ENCODE measurements at regions of chrX and their contacts with region 1.

Region 1: GRCh38 chrX:138925330-138925729 is 213.8 kb upstream of the FGF13 start:
- DNase-seq: peak; percentile 92
- ATAC-seq: peak; percentile 97
- H3K4me3 ChIP-seq: no peak overlapping the region
- H3K27ac ChIP-seq: peak overlapping the region; percentile 76
- H3K4me1 ChIP-seq: peaks cover 36% of the 10 kb centered on the region
- H3K27me3 ChIP-seq: no peaks in the 10 kb centered on the region
- CTCF ChIP-seq: no peak

Region 2: GRCh38 chrX:138745196-138745595 is 180.1 kb before region 1 on chrX:
- CTCF ChIA-PET with region 1: no interaction called
- POLR2A ChIA-PET with region 1: no interaction called
- intact Hi-C with region 1: no loop called
- DNase-seq: peak; percentile 74
- ATAC-seq: peak; percentile 51; the same call in 1 of the 2 replicates
- H3K4me3 ChIP-seq: no peak overlapping the region
- H3K27ac ChIP-seq: no peak overlapping the region
- H3K4me1 ChIP-seq: no peaks in the 10 kb centered on the region; the same call in 1 of the 2 replicates
- H3K27me3 ChIP-seq: no peaks in the 10 kb centered on the region
- CTCF ChIP-seq: peak; percentile 66

Region 3: GRCh38 chrX:138858438-138858837 is 66.9 kb before region 1 on chrX:
- CTCF ChIA-PET with region 1: no interaction called
- POLR2A ChIA-PET with region 1: no interaction called
- intact Hi-C with region 1: loop called (anchors 5 kb)
- DNase-seq: peak; percentile 76
- ATAC-seq: peak; percentile 79
- H3K4me3 ChIP-seq: no peak overlapping the region
- H3K27ac ChIP-seq: peak overlapping the region; percentile 61
- H3K4me1 ChIP-seq: peaks cover 31% of the 10 kb centered on the region
- H3K27me3 ChIP-seq: no peaks in the 10 kb centered on the region
- CTCF ChIP-seq: no peak

Region 4: GRCh38 chrX:138886769-138887168 is 38.6 kb before region 1 on chrX:
- CTCF ChIA-PET with region 1: no interaction called
- POLR2A ChIA-PET with region 1: no interaction called
- intact Hi-C with region 1: loop called (anchors 2 kb)
- DNase-seq: peak; percentile 94
- ATAC-seq: peak; percentile 85
- H3K4me3 ChIP-seq: no peak overlapping the region
- H3K27ac ChIP-seq: peak overlapping the region; percentile 89
- H3K4me1 ChIP-seq: peaks cover 29% of the 10 kb centered on the region
- H3K27me3 ChIP-seq: no peaks in the 10 kb centered on the region
- CTCF ChIP-seq: no peak

Region 5: DNA sequence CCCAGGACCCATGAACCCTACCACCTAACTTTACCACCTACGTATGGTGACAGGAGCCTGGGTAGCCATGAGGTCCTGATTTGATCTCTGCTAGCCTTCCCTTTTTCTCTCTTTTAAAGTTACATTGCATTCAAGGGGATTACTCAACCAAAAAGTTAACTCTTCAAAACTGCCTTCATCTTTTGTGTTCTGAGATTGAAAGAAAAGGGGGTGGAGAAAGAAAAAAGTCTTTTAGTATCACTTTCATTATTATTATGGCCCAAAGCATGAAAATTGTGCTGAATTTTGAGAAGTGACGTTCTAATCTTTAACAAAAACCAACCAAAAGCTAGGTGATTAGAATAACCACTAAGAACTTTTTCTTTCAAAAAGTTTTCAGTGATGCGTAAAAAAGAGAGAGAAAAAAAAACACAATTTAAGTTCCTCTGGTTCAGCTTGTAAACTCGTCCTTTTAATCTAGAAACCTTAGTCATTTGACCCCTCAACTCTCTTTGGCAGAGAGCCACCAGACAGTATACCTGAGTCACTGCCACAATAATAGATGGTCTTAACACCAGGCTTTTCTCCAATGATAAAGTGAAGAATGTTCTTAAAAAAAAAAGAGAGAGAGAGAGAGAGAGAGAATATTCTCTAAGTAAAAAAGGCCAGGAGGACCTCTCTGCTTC is 133.6 kb after region 1 on chrX:
- CTCF ChIA-PET with region 1: no interaction called
- POLR2A ChIA-PET with region 1: no interaction called
- intact Hi-C with region 1: loop called (anchors 5 kb)
- DNase-seq: peak; percentile 93
- ATAC-seq: peak; percentile 68
- H3K4me3 ChIP-seq: peak overlapping the region; percentile 57
- H3K27ac ChIP-seq: peak overlapping the region; percentile 67
- H3K4me1 ChIP-seq: peaks cover 24% of the 10 kb centered on the region
- H3K27me3 ChIP-seq: no peaks in the 10 kb centered on the region
- CTCF ChIP-seq: no peak

Region 6: DNA sequence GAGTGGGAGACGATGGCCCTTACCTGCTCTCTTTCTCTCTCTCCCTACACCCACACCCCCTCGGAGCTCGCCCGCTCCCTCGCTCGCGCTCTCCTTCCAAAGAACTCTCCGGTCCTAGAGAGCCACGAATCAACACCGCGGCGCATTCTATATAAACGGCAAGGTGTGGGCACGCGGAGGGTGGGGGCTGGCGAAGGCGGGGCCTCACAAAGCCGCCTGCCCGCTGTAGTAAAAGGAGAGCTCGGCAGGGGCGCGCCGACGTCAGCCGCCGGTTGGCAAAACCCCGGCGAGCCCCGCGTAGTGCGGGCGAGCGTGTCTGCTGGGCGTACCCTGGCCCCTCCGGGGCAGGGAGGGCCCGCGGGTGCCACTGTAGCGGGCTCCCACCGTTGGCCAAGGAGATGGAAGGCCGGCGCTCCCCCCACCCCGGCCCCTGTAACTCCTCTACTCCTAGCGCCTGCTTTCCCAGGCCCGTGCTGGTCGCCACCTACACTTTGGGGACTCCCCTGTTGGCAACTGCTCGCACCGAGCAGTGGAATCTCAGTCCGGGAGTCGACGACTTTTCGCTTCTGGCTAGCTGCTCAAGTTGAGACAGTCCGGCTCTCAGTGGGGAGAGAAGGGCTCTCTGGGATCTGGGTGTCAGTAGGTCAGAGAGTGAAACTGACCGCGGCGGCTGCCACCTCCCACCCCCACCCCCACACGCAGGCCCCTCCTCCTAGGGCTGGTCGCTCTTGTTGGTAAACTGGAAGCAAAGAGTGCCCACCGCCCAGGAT is 279.8 kb after region 1 on chrX:
- CTCF ChIA-PET with region 1: no interaction called
- POLR2A ChIA-PET with region 1: no interaction called
- intact Hi-C with region 1: loop called (anchors 2 kb)
- DNase-seq: peak; percentile 58
- ATAC-seq: peak; percentile 43
- H3K4me3 ChIP-seq: peak overlapping the region; percentile 75
- H3K27ac ChIP-seq: no peak overlapping the region
- H3K4me1 ChIP-seq: peaks cover 28% of the 10 kb centered on the region
- H3K27me3 ChIP-seq: no peaks in the 10 kb centered on the region
- CTCF ChIP-seq: 0 out of 2 replicates have a peak, but pooled peaks have one; percentile 20

Measured in PC-3 (cell line).